ENCODE measurements at regions of chr22 and their contacts with region 1.

Region 1: DNA sequence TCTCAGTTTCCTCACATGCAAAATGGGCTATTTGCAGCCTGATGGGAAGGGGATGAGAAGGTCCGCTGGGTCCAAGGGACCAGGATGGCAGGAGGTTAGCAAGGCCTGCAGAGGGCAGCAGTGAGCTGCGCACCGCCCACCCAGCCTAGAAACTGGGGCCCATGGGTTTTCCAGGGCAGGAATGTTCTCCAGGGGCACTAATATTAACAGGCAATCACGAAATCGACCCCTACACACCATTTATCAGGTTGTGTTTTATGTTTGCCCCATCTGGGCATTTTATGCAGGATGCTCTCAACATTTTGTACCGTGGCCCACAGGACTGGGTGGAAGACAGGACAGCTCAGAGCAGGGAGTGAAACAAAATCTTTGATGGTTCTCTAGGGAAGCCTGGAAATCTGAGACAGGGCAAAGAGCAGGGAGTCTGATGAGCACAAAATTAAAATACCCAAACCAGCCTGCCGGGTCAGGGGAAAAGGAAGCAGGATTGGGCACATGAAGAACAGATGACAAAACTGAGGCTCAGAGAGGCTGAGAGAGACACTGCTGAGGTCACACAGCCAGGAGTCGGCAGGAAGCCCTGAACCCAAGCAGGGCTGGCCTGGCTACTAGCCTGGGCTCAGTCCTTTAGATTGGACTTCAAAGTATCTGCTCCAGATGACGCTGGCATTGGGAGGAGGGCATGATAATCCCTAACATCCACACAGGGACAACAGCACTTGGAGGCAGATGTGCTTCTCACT is 1.6 kb upstream of the BCR start:
- DNase-seq: peak; percentile 78
- ATAC-seq: no peak
- H3K4me3 ChIP-seq: no peak overlapping the region
- H3K4me3 Mint-ChIP-seq: peak overlapping the region; percentile 83
- H3K27ac ChIP-seq: no peak overlapping the region
- H3K27ac Mint-ChIP-seq: peak overlapping the region; percentile 67
- H3K4me1 ChIP-seq: peaks cover 41 to 58% of the 10 kb centered on the region in 2 donors
- H3K4me1 Mint-ChIP-seq: peaks cover 48% of the 10 kb centered on the region
- H3K27me3 ChIP-seq: peaks cover 0 to 11% (median 3%) of the 10 kb centered on the region in 4 experiments
- H3K27me3 Mint-ChIP-seq: peaks cover 7% of the 10 kb centered on the region
- CTCF ChIP-seq: peak; percentile 97

Region 2: GRCh38 chr22:23113067-23113846 is 65.4 kb before region 1 on chr22:
- CTCF ChIA-PET with region 1: no interaction called
- POLR2A ChIA-PET with region 1: no interaction called
- intact Hi-C with region 1: no loop called
- DNase-seq: no peak
- ATAC-seq: peak; percentile 28
- H3K4me3 ChIP-seq: no peak overlapping the region
- H3K4me3 Mint-ChIP-seq: no peak overlapping the region
- H3K27ac ChIP-seq: no peak overlapping the region
- H3K27ac Mint-ChIP-seq: no peak overlapping the region
- H3K4me1 ChIP-seq: no peaks in the 10 kb centered on the region
- H3K4me1 Mint-ChIP-seq: peaks cover 3% of the 10 kb centered on the region
- H3K27me3 ChIP-seq: no peaks in the 10 kb centered on the region
- H3K27me3 Mint-ChIP-seq: no peaks in the 10 kb centered on the region
- CTCF ChIP-seq: no peak

Region 3: DNA sequence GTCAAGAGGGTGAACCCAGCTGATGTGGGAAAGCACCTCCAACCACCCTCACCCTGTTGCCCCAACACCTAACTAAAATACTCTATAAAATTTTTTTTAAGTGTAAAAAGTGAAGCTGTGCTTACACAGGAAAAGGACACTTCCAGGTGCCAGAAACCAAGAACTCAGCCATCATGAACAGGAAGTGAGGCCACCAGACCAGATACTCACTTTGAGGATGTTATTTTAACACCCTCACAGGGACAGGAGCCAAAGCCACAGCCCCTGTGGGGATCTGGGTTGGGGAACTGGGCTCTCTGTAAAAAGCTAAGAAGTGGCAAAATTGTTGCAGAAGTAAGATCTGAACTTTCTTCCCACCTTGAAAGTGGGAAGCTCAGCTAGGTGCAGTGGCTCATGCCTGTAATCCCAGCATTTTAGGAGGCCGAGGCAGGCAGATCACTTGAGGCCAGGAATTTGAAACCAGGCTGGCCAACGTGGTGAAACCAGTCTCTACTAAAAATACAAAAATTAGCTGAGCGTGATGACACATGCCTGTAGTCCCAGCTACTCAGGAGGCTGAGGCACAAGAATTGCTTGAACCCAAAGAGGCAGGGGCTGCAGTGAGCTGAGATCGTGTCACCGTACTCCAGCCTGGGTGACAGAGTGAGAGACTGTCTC is 40.6 kb before region 1 on chr22:
- CTCF ChIA-PET with region 1: interaction called, 15 read pairs
- POLR2A ChIA-PET with region 1: interaction called, 4 read pairs
- intact Hi-C with region 1: no loop called
- DNase-seq: peak; percentile 89
- ATAC-seq: peak; percentile 50
- H3K4me3 ChIP-seq: peak overlapping the region in 1 of 5 experiments; percentile 21
- H3K4me3 Mint-ChIP-seq: peak overlapping the region; percentile 65
- H3K27ac ChIP-seq: peak overlapping the region; percentile 89 to 91
- H3K27ac Mint-ChIP-seq: peak overlapping the region; percentile 89
- H3K4me1 ChIP-seq: peaks cover 59 to 72% of the 10 kb centered on the region in 2 donors
- H3K4me1 Mint-ChIP-seq: peaks cover 54% of the 10 kb centered on the region
- H3K27me3 ChIP-seq: no peaks in the 10 kb centered on the region
- H3K27me3 Mint-ChIP-seq: no peaks in the 10 kb centered on the region
- CTCF ChIP-seq: no peak

Region 4: GRCh38 chr22:23219822-23220484 is 41.3 kb after region 1 on chr22:
- CTCF ChIA-PET with region 1: interaction called, 14 read pairs
- POLR2A ChIA-PET with region 1: interaction called, 7 read pairs
- intact Hi-C with region 1: loop called (anchors 1 kb)
- DNase-seq: peak; percentile 65
- ATAC-seq: peak; percentile 83
- H3K4me3 ChIP-seq: peak overlapping the region; percentile 16 to 41 (median 31)
- H3K4me3 Mint-ChIP-seq: peak overlapping the region; percentile 84
- H3K27ac ChIP-seq: peak overlapping the region; percentile 38 to 72
- H3K27ac Mint-ChIP-seq: peak overlapping the region; percentile 93
- H3K4me1 ChIP-seq: peaks cover 70 to 79% of the 10 kb centered on the region in 2 donors
- H3K4me1 Mint-ChIP-seq: peaks cover 82% of the 10 kb centered on the region
- H3K27me3 ChIP-seq: no peaks in the 10 kb centered on the region
- H3K27me3 Mint-ChIP-seq: no peaks in the 10 kb centered on the region
- CTCF ChIP-seq: no peak

Region 5: GRCh38 chr22:23263651-23264555 is 85.2 kb after region 1 on chr22:
- CTCF ChIA-PET with region 1: interaction called, 86 read pairs
- POLR2A ChIA-PET with region 1: interaction called, 3 read pairs
- intact Hi-C with region 1: no loop called
- DNase-seq: peak; percentile 57
- ATAC-seq: peak; percentile 85
- H3K4me3 ChIP-seq: no peak overlapping the region
- H3K4me3 Mint-ChIP-seq: no peak overlapping the region
- H3K27ac ChIP-seq: peak overlapping the region; percentile 26 to 40
- H3K27ac Mint-ChIP-seq: peak overlapping the region; percentile 78
- H3K4me1 ChIP-seq: peaks cover 5 to 10% of the 10 kb centered on the region in 2 donors
- H3K4me1 Mint-ChIP-seq: peaks cover 11% of the 10 kb centered on the region
- H3K27me3 ChIP-seq: no peaks in the 10 kb centered on the region
- H3K27me3 Mint-ChIP-seq: no peaks in the 10 kb centered on the region
- CTCF ChIP-seq: no peak

Region 6: DNA sequence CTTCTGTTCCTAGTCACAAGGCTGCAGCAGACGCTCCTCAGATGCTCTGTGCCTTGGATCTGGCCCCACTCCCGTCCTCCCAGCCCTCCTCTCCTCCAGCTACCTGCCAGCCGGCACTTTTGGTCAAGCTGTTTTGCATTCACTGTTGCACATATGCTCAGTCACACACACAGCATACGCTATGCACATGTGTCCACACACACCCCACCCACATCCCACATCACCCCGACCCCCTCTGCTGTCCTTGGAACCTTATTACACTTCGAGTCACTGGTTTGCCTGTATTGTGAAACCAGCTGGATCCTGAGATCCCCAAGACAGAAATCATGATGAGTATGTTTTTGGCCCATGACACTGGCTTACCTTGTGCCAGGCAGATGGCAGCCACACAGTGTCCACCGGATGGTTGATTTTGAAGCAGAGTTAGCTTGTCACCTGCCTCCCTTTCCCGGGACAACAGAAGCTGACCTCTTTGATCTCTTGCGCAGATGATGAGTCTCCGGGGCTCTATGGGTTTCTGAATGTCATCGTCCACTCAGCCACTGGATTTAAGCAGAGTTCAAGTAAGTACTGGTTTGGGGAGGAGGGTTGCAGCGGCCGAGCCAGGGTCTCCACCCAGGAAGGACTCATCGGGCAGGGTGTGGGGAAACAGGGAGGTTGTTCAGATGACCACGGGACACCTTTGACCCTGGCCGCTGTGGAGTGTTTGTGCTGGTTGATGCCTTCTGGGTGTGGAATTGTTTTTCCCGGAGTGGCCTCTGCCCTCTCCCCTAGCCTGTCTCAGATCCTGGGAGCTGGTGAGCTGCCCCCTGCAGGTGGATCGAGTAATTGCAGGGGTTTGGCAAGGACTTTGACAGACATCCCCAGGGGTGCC is 111.4 kb after region 1 on chr22:
- CTCF ChIA-PET with region 1: interaction called, 494 read pairs
- POLR2A ChIA-PET with region 1: interaction called, 3 read pairs
- intact Hi-C with region 1: no loop called
- DNase-seq: peak; percentile 69
- ATAC-seq: peak; percentile 53
- H3K4me3 ChIP-seq: no peak overlapping the region
- H3K4me3 Mint-ChIP-seq: no peak overlapping the region
- H3K27ac ChIP-seq: no peak overlapping the region
- H3K27ac Mint-ChIP-seq: no peak overlapping the region
- H3K4me1 ChIP-seq: no peaks in the 10 kb centered on the region
- H3K4me1 Mint-ChIP-seq: no peaks in the 10 kb centered on the region
- H3K27me3 ChIP-seq: no peaks in the 10 kb centered on the region
- H3K27me3 Mint-ChIP-seq: no peaks in the 10 kb centered on the region
- CTCF ChIP-seq: peak; percentile 75

Region 7: GRCh38 chr22:23437779-23438178 is 259.1 kb after region 1 on chr22:
- CTCF ChIA-PET with region 1: no interaction called
- POLR2A ChIA-PET with region 1: no interaction called
- intact Hi-C with region 1: no loop called
- DNase-seq: no peak
- ATAC-seq: no peak
- H3K4me3 ChIP-seq: no peak overlapping the region
- H3K4me3 Mint-ChIP-seq: no peak overlapping the region
- H3K27ac ChIP-seq: no peak overlapping the region
- H3K27ac Mint-ChIP-seq: no peak overlapping the region
- H3K4me1 ChIP-seq: peaks cover 3 to 9% of the 10 kb centered on the region in 2 donors
- H3K4me1 Mint-ChIP-seq: peaks cover 8% of the 10 kb centered on the region
- H3K27me3 ChIP-seq: peaks cover 0 to 2% (median 0%) of the 10 kb centered on the region in 4 experiments
- H3K27me3 Mint-ChIP-seq: peaks cover 8% of the 10 kb centered on the region
- CTCF ChIP-seq: no peak

Region 8: DNA sequence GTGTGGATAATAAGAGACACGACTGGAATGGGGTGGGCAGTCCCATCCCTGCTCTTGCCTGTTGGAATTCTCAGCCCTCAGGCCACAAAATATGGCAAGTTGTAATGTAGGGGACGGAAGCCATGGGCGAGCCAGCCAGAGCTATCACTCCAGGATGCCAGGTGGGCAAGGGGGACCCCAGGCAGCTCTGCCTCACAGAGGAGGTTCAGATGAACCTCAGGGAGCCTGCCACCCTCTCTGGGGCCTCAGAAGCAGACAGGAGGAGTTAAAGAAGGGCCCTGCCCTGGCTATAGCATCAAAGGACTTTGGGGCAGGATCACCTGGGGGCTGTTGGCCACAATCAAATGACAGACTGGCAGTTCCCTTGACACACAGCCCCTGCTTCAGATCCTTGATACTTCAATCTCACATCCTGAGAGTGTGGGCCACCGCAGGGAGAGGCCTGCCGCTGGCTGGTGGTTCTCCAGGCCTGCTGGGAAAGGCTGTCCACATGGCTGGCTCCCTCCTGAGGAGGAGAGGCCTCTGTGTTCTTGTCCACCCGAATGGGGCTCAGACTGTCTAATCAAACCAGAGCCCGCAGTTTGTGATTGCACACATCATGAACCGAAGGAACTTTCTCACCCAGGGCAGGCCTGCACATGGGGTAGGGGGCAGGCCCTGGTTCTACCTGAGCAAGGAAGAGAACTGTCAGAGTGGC is 370.0 kb after region 1 on chr22:
- CTCF ChIA-PET with region 1: no interaction called
- POLR2A ChIA-PET with region 1: no interaction called
- intact Hi-C with region 1: no loop called
- DNase-seq: no peak
- ATAC-seq: no peak
- H3K4me3 ChIP-seq: no peak overlapping the region
- H3K4me3 Mint-ChIP-seq: no peak overlapping the region
- H3K27ac ChIP-seq: no peak overlapping the region
- H3K27ac Mint-ChIP-seq: no peak overlapping the region
- H3K4me1 ChIP-seq: no peaks in the 10 kb centered on the region
- H3K4me1 Mint-ChIP-seq: no peaks in the 10 kb centered on the region
- H3K27me3 ChIP-seq: peaks cover 0 to 2% (median 0%) of the 10 kb centered on the region in 4 experiments
- H3K27me3 Mint-ChIP-seq: no peaks in the 10 kb centered on the region
- CTCF ChIP-seq: no peak

Measured in B cell (primary cell).